ENCODE measurements at regions of chr22 and their contacts with region 1.

Region 1: GRCh38 chr22:23178512-23179254 is 1.6 kb upstream of the BCR start:
- DNase-seq: peak; percentile 86
- ATAC-seq: peak; percentile 75

Region 2: GRCh38 chr22:23270212-23270733 is 91.6 kb after region 1 on chr22:
- intact Hi-C with region 1: loop called (anchors 5 kb)
- DNase-seq: no peak
- ATAC-seq: peak; percentile 35

Region 3: GRCh38 chr22:23281406-23282088 is 102.9 kb after region 1 on chr22:
- intact Hi-C with region 1: loop called (anchors 1 kb)
- DNase-seq: peak; percentile 95
- ATAC-seq: peak; percentile 78

Region 4: GRCh38 chr22:23351321-23351720 is 172.6 kb after region 1 on chr22:
- intact Hi-C with region 1: no loop called
- DNase-seq: no peak
- ATAC-seq: no peak

Region 5: GRCh38 chr22:23385291-23386244 is 206.9 kb after region 1 on chr22:
- intact Hi-C with region 1: loop called (anchors 10 kb)
- DNase-seq: peak; percentile 94
- ATAC-seq: peak; percentile 86